ENCODE measurements at regions of chr3 and their contacts with region 1.

Region 1: GRCh38 chr3:157618075-157618760 is 115.0 kb upstream of the VEPH1 start:
- DNase-seq: peak in 1 of 2 experiments; percentile 15
- H3K4me3 ChIP-seq: no peak overlapping the region
- H3K4me3 Mint-ChIP-seq: no peak overlapping the region
- H3K27ac Mint-ChIP-seq: no peak overlapping the region
- H3K4me1 ChIP-seq: no peaks in the 10 kb centered on the region
- H3K4me1 Mint-ChIP-seq: peaks cover 7% of the 10 kb centered on the region
- H3K27me3 ChIP-seq: no peaks in the 10 kb centered on the region; the same call in 1 of the 2 replicates
- H3K27me3 Mint-ChIP-seq: peaks cover 12% of the 10 kb centered on the region
- CTCF ChIP-seq: peak in 1 of 2 experiments; percentile 57

Region 2: GRCh38 chr3:157436583-157437291 is 181.5 kb before region 1 on chr3 and contains the start of gene PTX3:
- CTCF ChIA-PET with region 1: no interaction called
- POLR2A ChIA-PET with region 1: no interaction called
- intact Hi-C with region 1: no loop called
- DNase-seq: no peak
- H3K4me3 ChIP-seq: peak within 1 kb of the TSS; percentile 35
- H3K4me3 Mint-ChIP-seq: peak within 1 kb of the TSS; percentile 74
- H3K27ac Mint-ChIP-seq: no peak within 1 kb of the TSS
- H3K4me1 ChIP-seq: 0 out of 2 replicates have a peak, but pooled peaks cover 7% of the 10 kb centered on the region
- H3K4me1 Mint-ChIP-seq: peaks cover 6% of the 10 kb centered on the region
- H3K27me3 ChIP-seq: no peaks in the 10 kb centered on the region; the same call in 1 of the 2 replicates
- H3K27me3 Mint-ChIP-seq: peaks cover 21% of the 10 kb centered on the region
- CTCF ChIP-seq: no peak
- total RNA-seq, gene PTX3: 0.16 TPM in 1 of 2 replicates, not detected in the other

Region 3: DNA sequence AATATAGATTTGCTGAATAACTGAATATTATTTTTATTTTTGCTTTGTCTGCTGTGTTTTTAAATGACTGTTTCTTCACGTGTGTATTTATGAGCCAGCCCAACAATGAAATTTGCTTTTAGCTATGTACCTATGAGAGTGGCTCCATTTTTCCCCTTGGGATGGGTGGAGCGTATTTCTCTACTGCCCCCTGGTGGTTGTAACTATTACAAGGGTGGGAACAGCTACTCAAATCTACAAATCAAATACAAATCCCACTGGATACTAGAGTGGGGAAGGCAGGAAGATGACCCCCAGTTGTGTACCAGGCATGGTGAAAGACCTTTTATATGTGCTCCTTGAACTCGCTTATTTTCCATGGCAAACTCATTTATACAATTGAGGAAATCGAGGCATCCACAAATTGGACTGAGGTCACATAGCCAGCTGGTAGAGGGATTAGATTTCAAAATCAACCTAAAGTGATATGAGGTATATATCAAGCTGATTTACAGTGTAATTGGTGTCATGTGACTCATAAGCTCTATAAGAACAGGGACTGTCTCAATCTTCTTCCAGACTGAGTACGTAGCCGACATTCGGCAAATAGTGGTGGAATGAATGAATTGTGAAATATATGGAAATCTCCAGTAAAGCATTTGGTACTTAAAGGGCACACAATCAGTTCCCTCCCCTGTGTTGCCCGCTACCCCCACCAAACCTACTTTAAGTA is 45.5 kb before region 1 on chr3:
- CTCF ChIA-PET with region 1: no interaction called
- POLR2A ChIA-PET with region 1: no interaction called
- intact Hi-C with region 1: no loop called
- DNase-seq: peak; percentile 48 to 71
- H3K4me3 ChIP-seq: no peak overlapping the region
- H3K4me3 Mint-ChIP-seq: no peak overlapping the region
- H3K27ac Mint-ChIP-seq: no peak overlapping the region
- H3K4me1 ChIP-seq: 0 out of 2 replicates have a peak, but pooled peaks cover 3% of the 10 kb centered on the region
- H3K4me1 Mint-ChIP-seq: peaks cover 11% of the 10 kb centered on the region
- H3K27me3 ChIP-seq: no peaks in the 10 kb centered on the region
- H3K27me3 Mint-ChIP-seq: peaks cover 2% of the 10 kb centered on the region
- CTCF ChIP-seq: peak; percentile 78 to 88

Region 4: DNA sequence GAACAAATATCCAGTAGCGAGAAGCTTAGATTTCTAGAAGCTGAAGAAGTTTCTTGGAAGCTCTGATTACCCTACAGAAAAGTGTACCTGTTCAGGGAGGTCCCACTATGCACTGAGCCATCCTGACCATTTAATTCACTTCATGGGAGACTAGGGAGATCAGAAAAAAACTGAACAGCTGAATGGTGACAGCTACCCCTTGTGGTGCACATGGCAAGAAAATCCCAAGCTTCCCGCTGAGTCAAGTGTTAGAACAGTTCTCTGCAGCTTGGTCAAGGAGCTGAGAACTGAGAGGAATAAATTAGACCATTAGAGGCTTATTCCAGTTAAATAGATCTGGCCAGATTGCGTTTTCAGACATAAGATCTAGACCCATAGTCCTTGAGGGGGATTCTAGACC is 82.2 kb after region 1 on chr3:
- CTCF ChIA-PET with region 1: interaction called, 3 read pairs
- POLR2A ChIA-PET with region 1: no interaction called
- intact Hi-C with region 1: loop called (anchors 1 kb)
- DNase-seq: peak in 1 of 2 experiments; percentile 2
- H3K4me3 ChIP-seq: no peak overlapping the region
- H3K4me3 Mint-ChIP-seq: no peak overlapping the region
- H3K27ac Mint-ChIP-seq: no peak overlapping the region
- H3K4me1 ChIP-seq: no peaks in the 10 kb centered on the region
- H3K4me1 Mint-ChIP-seq: no peaks in the 10 kb centered on the region
- H3K27me3 ChIP-seq: no peaks in the 10 kb centered on the region
- H3K27me3 Mint-ChIP-seq: peaks cover 12% of the 10 kb centered on the region
- CTCF ChIP-seq: peak in 1 of 2 experiments; percentile 38

Region 5: GRCh38 chr3:157906627-157907026 is 288.4 kb after region 1 on chr3:
- CTCF ChIA-PET with region 1: no interaction called
- POLR2A ChIA-PET with region 1: no interaction called
- intact Hi-C with region 1: loop called (anchors 1 kb)
- DNase-seq: no peak
- H3K4me3 ChIP-seq: no peak overlapping the region
- H3K4me3 Mint-ChIP-seq: no peak overlapping the region
- H3K27ac Mint-ChIP-seq: no peak overlapping the region
- H3K4me1 ChIP-seq: no peaks in the 10 kb centered on the region
- H3K4me1 Mint-ChIP-seq: no peaks in the 10 kb centered on the region
- H3K27me3 ChIP-seq: no peaks in the 10 kb centered on the region
- H3K27me3 Mint-ChIP-seq: no peaks in the 10 kb centered on the region
- CTCF ChIP-seq: no peak

Region 6: DNA sequence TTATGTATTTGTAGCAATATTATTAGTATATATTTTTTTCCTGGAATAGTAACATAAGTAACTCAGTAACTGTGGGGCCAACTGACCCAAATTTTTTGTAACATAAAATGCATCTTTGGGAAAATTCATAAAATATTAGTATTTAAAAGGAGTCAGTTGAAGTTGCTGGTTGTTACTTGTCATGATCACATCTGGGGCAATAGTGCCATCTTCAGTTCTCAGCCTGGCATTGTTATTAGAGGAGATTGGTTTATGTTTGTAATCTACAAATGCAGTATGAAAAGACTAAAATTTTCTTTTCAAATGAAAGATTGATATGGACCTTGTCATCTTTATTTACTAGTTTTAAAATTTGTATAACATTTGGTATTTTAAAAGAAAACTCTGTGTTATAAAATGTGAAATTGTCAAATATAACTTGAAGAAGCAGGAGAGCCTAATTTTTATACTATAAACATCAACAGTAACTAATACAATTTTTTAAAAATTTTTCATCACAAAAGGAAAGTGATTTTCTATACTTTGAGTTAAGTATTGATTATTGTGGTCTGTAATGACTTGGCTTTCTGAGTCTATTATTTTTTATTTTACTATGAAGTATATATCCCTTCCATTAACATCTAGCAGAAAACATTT is 914.0 kb after region 1 on chr3:
- CTCF ChIA-PET with region 1: no interaction called
- POLR2A ChIA-PET with region 1: no interaction called
- intact Hi-C with region 1: loop called (anchors 2 kb)
- DNase-seq: peak in 1 of 2 experiments; percentile 9
- H3K4me3 ChIP-seq: no peak overlapping the region
- H3K4me3 Mint-ChIP-seq: no peak overlapping the region
- H3K27ac Mint-ChIP-seq: no peak overlapping the region
- H3K4me1 ChIP-seq: no peaks in the 10 kb centered on the region
- H3K4me1 Mint-ChIP-seq: no peaks in the 10 kb centered on the region
- H3K27me3 ChIP-seq: no peaks in the 10 kb centered on the region
- H3K27me3 Mint-ChIP-seq: no peaks in the 10 kb centered on the region
- CTCF ChIP-seq: peak in 1 of 2 experiments; percentile 44